ENCODE measurements at regions of chr9 and their contacts with region 1.

Region 1: GRCh38 chr9:124617471-124618141 is 110.4 kb upstream of the NR5A1 start:
- DNase-seq: peak; percentile 48
- H3K4me3 ChIP-seq: no peak overlapping the region
- H3K27ac ChIP-seq: no peak overlapping the region
- H3K27me3 ChIP-seq: peaks cover 4% of the 10 kb centered on the region
- CTCF ChIP-seq: peak; percentile 98

Region 2: DNA sequence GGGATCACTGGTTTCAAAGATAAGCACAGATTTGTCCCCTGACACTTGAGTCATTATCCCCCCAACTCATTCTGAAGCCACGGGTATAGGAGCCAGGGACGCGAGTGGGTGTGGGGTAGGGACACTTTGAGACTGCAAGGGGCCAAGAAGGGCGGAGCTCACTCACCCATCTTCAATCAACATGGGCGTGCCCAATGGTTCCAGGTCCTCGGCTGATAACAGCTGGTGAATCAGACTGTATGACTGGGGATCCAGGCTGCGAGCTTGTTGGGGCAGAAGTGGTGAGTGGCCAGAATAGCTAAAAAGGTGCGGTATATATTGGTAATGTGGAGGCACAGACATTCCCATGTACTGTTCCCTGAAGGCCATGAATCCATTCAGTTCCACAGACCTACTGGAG is 79.7 kb before region 1 on chr9:
- CTCF ChIA-PET with region 1: interaction called, 10 read pairs
- POLR2A ChIA-PET with region 1: no interaction called
- DNase-seq: no peak
- H3K4me3 ChIP-seq: no peak overlapping the region
- H3K27ac ChIP-seq: no peak overlapping the region
- H3K27me3 ChIP-seq: peaks cover 10% of the 10 kb centered on the region
- CTCF ChIP-seq: no peak

Region 3: GRCh38 chr9:124574534-124575341 is 42.9 kb before region 1 on chr9:
- CTCF ChIA-PET with region 1: interaction called, 25 read pairs
- POLR2A ChIA-PET with region 1: no interaction called
- DNase-seq: peak; percentile 43
- H3K4me3 ChIP-seq: no peak overlapping the region
- H3K27ac ChIP-seq: no peak overlapping the region
- H3K27me3 ChIP-seq: no peaks in the 10 kb centered on the region
- CTCF ChIP-seq: no peak

Region 4: DNA sequence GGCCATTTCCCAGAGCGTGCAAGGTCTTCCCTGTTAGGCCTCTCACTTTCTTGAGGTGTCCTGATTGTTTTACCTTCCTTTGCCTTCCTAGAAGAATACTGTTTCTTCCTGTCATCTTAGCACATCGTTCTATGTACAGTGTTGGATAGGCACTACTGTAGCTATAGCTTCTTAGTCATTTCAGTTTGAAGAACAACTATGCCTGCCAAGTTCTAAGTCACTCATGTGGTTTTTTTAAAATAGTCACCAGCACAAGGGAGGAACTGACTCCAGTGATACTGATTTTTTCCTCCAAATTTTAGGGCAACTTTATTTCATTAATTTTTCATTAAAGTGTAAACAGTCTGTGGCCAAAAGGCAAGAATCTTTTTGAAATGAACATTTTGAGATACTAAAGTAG is 12.0 kb after region 1 on chr9:
- CTCF ChIA-PET with region 1: interaction called, 19 read pairs
- POLR2A ChIA-PET with region 1: no interaction called
- DNase-seq: no peak
- H3K4me3 ChIP-seq: no peak overlapping the region
- H3K27ac ChIP-seq: no peak overlapping the region
- H3K27me3 ChIP-seq: no peaks in the 10 kb centered on the region
- CTCF ChIP-seq: no peak

Region 5: DNA sequence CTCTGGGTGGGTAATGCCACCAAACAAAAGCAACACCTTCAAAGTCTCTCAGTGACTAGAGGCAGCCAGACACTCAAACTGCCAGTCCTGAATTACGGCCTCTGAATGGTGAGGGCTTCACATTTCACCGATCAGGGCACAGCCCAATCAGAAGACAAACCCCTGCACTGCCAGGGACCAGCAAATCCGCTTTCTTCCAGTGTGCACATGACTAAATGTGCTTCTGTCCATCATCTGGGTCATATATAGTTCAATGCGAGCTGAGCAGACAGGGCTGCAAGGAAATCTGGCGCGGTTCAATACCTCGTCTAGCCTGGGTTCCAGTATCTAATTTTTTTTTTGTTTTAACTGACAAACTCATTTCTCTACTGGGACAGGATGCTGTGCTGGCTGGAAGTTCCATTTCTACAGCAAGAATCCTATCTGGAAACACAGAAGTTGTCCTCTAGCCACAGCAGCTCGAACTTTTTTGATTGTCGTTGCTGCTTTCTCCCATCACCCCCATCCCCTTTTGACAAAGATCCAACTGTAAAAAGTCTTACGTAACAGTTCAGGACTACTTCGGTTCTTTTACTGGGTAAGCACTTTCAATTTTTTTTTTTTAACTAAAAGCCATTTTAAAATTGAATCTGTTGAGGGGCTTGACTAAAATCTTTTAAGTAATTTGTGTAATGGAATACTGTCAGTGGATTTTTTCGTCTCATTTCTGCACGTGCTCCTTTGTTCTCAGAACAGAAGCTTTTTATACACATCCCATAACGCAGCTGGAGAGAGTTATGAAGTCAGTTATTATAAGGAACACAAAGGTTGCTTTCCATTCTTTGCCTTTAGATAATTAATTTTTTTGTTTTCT is 40.8 kb after region 1 on chr9:
- CTCF ChIA-PET with region 1: interaction called, 21 read pairs
- POLR2A ChIA-PET with region 1: interaction called, 5 read pairs
- DNase-seq: peak; percentile 93
- H3K4me3 ChIP-seq: peak overlapping the region; percentile 71
- H3K27ac ChIP-seq: peak overlapping the region; percentile 93
- H3K27me3 ChIP-seq: no peaks in the 10 kb centered on the region
- CTCF ChIP-seq: no peak

Region 6: GRCh38 chr9:124708633-124709291 is 91.2 kb after region 1 on chr9:
- CTCF ChIA-PET with region 1: interaction called, 314 read pairs
- POLR2A ChIA-PET with region 1: no interaction called
- DNase-seq: no peak
- H3K4me3 ChIP-seq: no peak overlapping the region
- H3K27ac ChIP-seq: no peak overlapping the region
- H3K27me3 ChIP-seq: no peaks in the 10 kb centered on the region
- CTCF ChIP-seq: no peak

Region 7: DNA sequence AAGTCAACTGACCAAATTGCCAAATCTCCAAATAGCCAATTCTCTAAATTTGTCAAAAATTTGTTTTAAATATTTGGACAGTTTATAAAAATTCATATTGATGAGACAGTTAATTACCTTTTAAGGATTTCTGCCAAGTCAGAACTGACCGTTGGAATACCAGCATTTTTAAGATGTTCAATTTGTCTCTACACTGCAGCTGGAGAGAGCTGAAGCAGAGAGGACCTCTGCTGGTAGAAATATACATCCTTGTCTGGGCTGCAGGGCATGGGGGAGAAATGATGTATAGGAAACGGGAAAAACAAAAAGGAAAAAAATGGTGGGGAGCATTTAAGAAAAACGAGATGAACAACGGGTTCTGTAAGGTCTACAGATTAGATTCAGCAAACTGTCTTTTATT is 136.7 kb after region 1 on chr9:
- CTCF ChIA-PET with region 1: interaction called, 80 read pairs
- POLR2A ChIA-PET with region 1: no interaction called
- DNase-seq: no peak
- H3K4me3 ChIP-seq: no peak overlapping the region
- H3K27ac ChIP-seq: no peak overlapping the region
- H3K27me3 ChIP-seq: peaks cover 15% of the 10 kb centered on the region
- CTCF ChIP-seq: peak; percentile 80

Measured in AG04450 (cell line).